Endothelial cell of umbilical vein (primary cell): ENCODE measurements at regions of chr4 and their contacts with region 1.

Region 1: GRCh38 chr4:67909905-67910584 is 26.2 kb upstream of the TMPRSS11D start:
- DNase-seq: peak; percentile 34
- H3K4me3 ChIP-seq: no peak overlapping the region
- H3K27ac ChIP-seq: no peak overlapping the region
- H3K4me1 ChIP-seq: no peaks in the 10 kb centered on the region
- H3K27me3 ChIP-seq: peaks cover 1 to 6% of the 10 kb centered on the region in 2 experiments
- CTCF ChIP-seq: peak; percentile 30 to 37
- POLR2A ChIP-seq: no peak

Region 2: GRCh38 chr4:67545199-67546003 is 364.6 kb before region 1 on chr4 and contains the start of gene CENPC:
- CTCF ChIA-PET with region 1: interaction called, 9 read pairs
- POLR2A ChIA-PET with region 1: no interaction called
- dilution Hi-C with region 1: no loop called
- intact Hi-C with region 1: loop called (anchors 1 kb)
- DNase-seq: peak; percentile 99
- H3K4me3 ChIP-seq: peak within 1 kb of the TSS; percentile 87 to 100 (median 100)
- H3K27ac ChIP-seq: peak within 1 kb of the TSS; percentile 99
- H3K4me1 ChIP-seq: peaks cover 13% of the 10 kb centered on the region
- H3K27me3 ChIP-seq: no peaks in the 10 kb centered on the region
- CTCF ChIP-seq: no peak
- POLR2A ChIP-seq: peak; percentile 96
- total RNA-seq, gene CENPC: 24.5 and 26.4 TPM in 2 replicates

Region 3: GRCh38 chr4:67603310-67604028 is 306.6 kb before region 1 on chr4:
- CTCF ChIA-PET with region 1: no interaction called
- POLR2A ChIA-PET with region 1: no interaction called
- dilution Hi-C with region 1: no loop called
- intact Hi-C with region 1: no loop called
- DNase-seq: no peak
- H3K4me3 ChIP-seq: no peak overlapping the region
- H3K27ac ChIP-seq: no peak overlapping the region
- H3K4me1 ChIP-seq: no peaks in the 10 kb centered on the region
- H3K27me3 ChIP-seq: no peaks in the 10 kb centered on the region
- CTCF ChIP-seq: no peak
- POLR2A ChIP-seq: no peak

Region 4: DNA sequence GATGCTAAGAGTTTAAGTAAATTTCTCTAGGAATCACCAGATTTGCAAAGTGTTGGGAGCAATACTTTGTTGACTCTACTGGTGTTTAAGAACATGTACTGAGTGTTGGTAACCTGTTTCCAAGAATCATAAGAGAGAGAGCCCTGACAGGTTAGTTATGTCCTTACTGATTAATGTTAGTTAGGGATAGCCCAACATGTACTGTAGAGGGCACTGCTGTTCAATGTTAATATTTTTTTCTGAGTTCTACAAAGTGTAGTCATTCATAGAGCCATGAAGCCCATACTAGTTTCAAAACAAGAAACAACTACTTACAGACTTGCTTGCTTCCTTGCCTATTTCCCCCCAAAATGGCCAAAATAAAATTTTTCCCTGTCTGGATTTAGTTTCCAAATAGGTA is 38.2 kb before region 1 on chr4:
- CTCF ChIA-PET with region 1: interaction called, 52 read pairs
- POLR2A ChIA-PET with region 1: no interaction called
- dilution Hi-C with region 1: no loop called
- intact Hi-C with region 1: loop called (anchors 1 kb)
- DNase-seq: peak; percentile 74
- H3K4me3 ChIP-seq: no peak overlapping the region
- H3K27ac ChIP-seq: no peak overlapping the region
- H3K4me1 ChIP-seq: no peaks in the 10 kb centered on the region
- H3K27me3 ChIP-seq: no peaks in the 10 kb centered on the region
- CTCF ChIP-seq: peak; percentile 28 to 41
- POLR2A ChIP-seq: no peak

Region 5: DNA sequence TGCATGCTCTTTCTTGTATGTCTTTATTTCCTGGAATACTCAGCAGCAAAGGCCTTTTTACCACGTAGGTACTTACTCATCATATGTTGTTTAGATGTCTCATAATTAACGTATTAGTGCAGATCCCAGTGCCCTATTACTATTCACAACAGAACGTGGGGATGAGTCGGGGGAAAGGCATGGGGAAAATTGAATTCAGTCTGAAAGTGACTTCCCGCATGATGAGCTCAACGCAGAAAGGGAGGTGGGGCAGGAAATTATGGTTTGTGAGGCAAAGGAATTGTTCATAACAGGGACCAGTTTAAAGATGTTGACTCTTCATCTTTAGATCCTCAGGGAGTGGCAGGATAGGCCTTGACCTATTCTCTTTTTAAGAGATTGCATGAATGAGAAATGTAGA is 24.3 kb before region 1 on chr4:
- CTCF ChIA-PET with region 1: interaction called, 14 read pairs
- POLR2A ChIA-PET with region 1: no interaction called
- dilution Hi-C with region 1: no loop called
- intact Hi-C with region 1: loop called (anchors 1 kb)
- DNase-seq: peak; percentile 91
- H3K4me3 ChIP-seq: peak overlapping the region in 1 of 3 experiments; percentile 40
- H3K27ac ChIP-seq: peak overlapping the region; percentile 96
- H3K4me1 ChIP-seq: peaks cover 18% of the 10 kb centered on the region
- H3K27me3 ChIP-seq: no peaks in the 10 kb centered on the region
- CTCF ChIP-seq: no peak
- POLR2A ChIP-seq: no peak

Region 6: DNA sequence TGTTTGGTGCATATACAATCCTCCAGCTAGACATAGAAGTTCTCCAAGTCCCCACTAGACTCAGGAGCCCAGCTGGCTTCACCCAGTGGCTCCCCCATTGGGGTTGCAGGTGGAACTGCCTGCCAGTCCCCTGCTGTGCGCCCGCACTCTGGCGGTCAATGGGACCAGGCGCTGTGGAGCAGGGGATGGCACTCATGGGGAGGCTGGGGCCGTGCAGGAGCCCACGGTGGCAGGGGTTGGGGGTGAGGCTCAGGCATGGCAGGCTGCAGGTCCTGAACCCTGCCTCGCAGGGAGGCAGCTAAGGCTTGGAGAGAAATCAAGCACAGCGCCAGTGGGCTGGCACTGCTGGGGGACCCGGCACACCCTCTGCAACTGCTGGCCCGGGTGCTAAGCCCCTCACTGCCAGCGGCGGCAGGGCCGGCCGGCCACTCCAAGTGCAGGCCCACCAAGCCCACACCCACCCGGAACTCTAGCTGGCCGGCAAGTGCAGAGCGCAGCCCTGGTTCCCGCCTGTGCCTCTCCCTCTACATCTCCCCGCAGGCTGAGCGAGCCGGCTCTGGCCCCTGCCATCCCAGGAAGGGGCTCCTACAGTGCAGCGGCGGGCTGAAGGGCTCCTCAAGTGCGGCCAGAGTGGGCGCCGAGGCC is 13.5 kb before region 1 on chr4:
- CTCF ChIA-PET with region 1: interaction called, 17 read pairs
- POLR2A ChIA-PET with region 1: no interaction called
- dilution Hi-C with region 1: no loop called
- intact Hi-C with region 1: no loop called
- DNase-seq: no peak
- H3K4me3 ChIP-seq: no peak overlapping the region
- H3K27ac ChIP-seq: no peak overlapping the region
- H3K4me1 ChIP-seq: no peaks in the 10 kb centered on the region
- H3K27me3 ChIP-seq: no peaks in the 10 kb centered on the region
- CTCF ChIP-seq: no peak
- POLR2A ChIP-seq: no peak

Region 7: GRCh38 chr4:67928575-67928974 is 18.5 kb after region 1 on chr4:
- CTCF ChIA-PET with region 1: interaction called, 12 read pairs
- POLR2A ChIA-PET with region 1: no interaction called
- dilution Hi-C with region 1: no loop called
- intact Hi-C with region 1: no loop called
- DNase-seq: peak; percentile 31
- H3K4me3 ChIP-seq: no peak overlapping the region
- H3K27ac ChIP-seq: no peak overlapping the region
- H3K4me1 ChIP-seq: no peaks in the 10 kb centered on the region
- H3K27me3 ChIP-seq: no peaks in the 10 kb centered on the region
- CTCF ChIP-seq: no peak
- POLR2A ChIP-seq: no peak

Region 8: DNA sequence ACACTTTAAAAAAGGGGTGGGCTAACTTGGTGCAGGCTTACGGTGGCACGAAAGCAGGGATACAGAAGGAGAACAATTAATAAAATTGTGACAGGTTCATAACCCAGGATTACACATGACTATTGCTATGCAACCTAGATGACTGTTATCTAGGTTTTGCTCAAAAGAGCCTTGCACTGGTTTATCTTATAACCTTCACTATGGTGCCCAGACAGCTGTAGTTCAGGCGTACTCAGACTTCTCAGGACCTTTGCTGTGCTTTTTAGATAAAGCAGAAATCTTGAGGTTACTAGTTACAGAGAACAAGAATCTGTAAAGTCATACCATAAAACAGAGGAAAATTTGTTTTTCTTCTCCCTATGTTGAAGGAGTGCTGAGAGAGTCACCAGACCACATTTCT is 997.2 kb after region 1 on chr4:
- CTCF ChIA-PET with region 1: no interaction called
- POLR2A ChIA-PET with region 1: no interaction called
- dilution Hi-C with region 1: no loop called
- intact Hi-C with region 1: no loop called
- DNase-seq: no peak
- H3K4me3 ChIP-seq: no peak overlapping the region
- H3K27ac ChIP-seq: no peak overlapping the region
- H3K4me1 ChIP-seq: no peaks in the 10 kb centered on the region
- H3K27me3 ChIP-seq: no peaks in the 10 kb centered on the region
- CTCF ChIP-seq: no peak
- POLR2A ChIP-seq: no peak